ENCODE measurements at regions of chr4 and their contacts with region 1.

Region 1: GRCh38 chr4:87465739-87466366 is 43.5 kb downstream of the NUDT9 start:
- DNase-seq: no peak
- H3K4me3 ChIP-seq: no peak overlapping the region
- H3K27ac ChIP-seq: no peak overlapping the region
- H3K4me1 ChIP-seq: no peaks in the 10 kb centered on the region
- H3K27me3 ChIP-seq: no peaks in the 10 kb centered on the region
- CTCF ChIP-seq: peak; percentile 48 to 68 (median 67)
- POLR2A ChIP-seq: no peak

Region 2: GRCh38 chr4:87375719-87376291 is 90.0 kb before region 1 on chr4:
- intact Hi-C with region 1: loop called (anchors 5 kb)
- DNase-seq: peak; percentile 52
- H3K4me3 ChIP-seq: no peak overlapping the region
- H3K27ac ChIP-seq: no peak overlapping the region
- H3K4me1 ChIP-seq: no peaks in the 10 kb centered on the region
- H3K27me3 ChIP-seq: no peaks in the 10 kb centered on the region
- CTCF ChIP-seq: peak; percentile 54 to 66 (median 64)
- POLR2A ChIP-seq: no peak